ENCODE measurements at regions of chr13 and their contacts with region 1.

Region 1: DNA sequence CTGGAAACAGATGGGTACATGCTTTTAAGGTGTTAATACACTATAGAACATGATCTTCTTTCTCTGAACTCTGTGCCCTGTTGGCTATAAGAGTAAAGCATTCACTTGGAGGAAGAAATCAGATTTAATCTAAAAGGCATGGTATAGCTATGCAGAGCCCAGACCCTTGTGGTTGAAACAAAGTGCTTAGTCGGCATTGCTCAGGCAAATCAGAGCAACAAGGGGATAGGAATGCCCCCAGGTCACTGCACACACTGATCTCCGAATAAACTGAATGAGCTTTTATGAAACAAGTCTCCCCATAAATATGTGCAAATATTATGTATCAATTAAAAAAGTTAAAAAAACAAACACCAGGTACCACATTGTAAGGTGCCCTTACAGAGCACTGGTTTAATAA is 52.0 kb upstream of the RGCC start:
- DNase-seq: no peak
- H3K4me3 ChIP-seq: no peak overlapping the region
- H3K27ac ChIP-seq: no peak overlapping the region
- H3K4me1 ChIP-seq: peaks cover 0 to 4% (median 1%) of the 10 kb centered on the region in 4 experiments; a peak in 1 of 7 replicates
- H3K27me3 ChIP-seq: no peaks in the 10 kb centered on the region
- CTCF ChIP-seq: no peak
- EP300 ChIP-seq: no peak
- POLR2A ChIP-seq: no peak
- RAD21 ChIP-seq: no peak

Region 2: DNA sequence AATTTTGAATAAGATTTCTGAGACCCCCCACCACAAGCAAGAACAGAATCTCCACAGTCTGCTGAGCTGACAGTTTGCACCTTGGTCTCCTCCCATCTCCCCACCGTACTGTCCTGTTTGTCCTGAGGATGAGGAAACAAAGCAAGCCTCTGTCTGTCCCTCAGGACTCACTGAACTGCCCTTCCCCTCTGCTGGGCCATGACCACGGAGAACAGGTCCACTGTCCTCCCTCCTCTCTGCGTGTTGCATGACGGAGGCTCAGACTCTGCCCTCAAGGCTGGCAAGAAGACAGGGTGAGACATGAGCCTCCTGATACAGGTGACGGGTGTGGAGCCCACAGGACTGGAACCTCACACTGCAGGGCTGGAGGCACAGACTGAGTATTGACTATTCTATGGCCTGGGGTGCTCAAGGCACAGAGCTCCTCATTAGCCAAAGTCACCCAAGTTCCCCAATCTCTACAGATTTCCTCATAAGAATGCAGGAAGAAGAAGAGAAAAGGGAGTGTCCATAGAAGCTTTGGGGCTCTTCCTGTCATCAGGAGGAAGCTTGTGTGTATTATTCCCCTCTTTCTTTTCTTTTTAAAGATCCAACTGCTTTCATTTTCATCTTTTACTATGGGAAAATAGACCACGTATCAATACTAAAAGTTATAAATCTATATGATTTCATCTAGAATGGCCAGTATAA is 29.6 kb after region 1 on chr13:
- CTCF ChIA-PET with region 1: no interaction called
- POLR2A ChIA-PET with region 1: no interaction called
- DNase-seq: no peak
- H3K4me3 ChIP-seq: no peak overlapping the region
- H3K27ac ChIP-seq: no peak overlapping the region
- H3K4me1 ChIP-seq: no peaks in the 10 kb centered on the region
- H3K27me3 ChIP-seq: no peaks in the 10 kb centered on the region
- CTCF ChIP-seq: no peak
- EP300 ChIP-seq: no peak
- POLR2A ChIP-seq: no peak
- RAD21 ChIP-seq: no peak

Region 3: GRCh38 chr13:41652727-41653361 is 247.5 kb after region 1 on chr13:
- CTCF ChIA-PET with region 1: interaction called, 10 read pairs
- POLR2A ChIA-PET with region 1: no interaction called
- DNase-seq: no peak
- H3K4me3 ChIP-seq: no peak overlapping the region
- H3K27ac ChIP-seq: no peak overlapping the region
- H3K4me1 ChIP-seq: no peaks in the 10 kb centered on the region
- H3K27me3 ChIP-seq: no peaks in the 10 kb centered on the region
- CTCF ChIP-seq: peak in 2 of 3 experiments; percentile 24 to 31; a peak in 2 of 4 replicates
- EP300 ChIP-seq: no peak
- POLR2A ChIP-seq: no peak
- RAD21 ChIP-seq: peak; percentile 62 to 72

Measured in H1 (cell line).